ENCODE measurements at regions of chr11 and their contacts with region 1.

Region 1: DNA sequence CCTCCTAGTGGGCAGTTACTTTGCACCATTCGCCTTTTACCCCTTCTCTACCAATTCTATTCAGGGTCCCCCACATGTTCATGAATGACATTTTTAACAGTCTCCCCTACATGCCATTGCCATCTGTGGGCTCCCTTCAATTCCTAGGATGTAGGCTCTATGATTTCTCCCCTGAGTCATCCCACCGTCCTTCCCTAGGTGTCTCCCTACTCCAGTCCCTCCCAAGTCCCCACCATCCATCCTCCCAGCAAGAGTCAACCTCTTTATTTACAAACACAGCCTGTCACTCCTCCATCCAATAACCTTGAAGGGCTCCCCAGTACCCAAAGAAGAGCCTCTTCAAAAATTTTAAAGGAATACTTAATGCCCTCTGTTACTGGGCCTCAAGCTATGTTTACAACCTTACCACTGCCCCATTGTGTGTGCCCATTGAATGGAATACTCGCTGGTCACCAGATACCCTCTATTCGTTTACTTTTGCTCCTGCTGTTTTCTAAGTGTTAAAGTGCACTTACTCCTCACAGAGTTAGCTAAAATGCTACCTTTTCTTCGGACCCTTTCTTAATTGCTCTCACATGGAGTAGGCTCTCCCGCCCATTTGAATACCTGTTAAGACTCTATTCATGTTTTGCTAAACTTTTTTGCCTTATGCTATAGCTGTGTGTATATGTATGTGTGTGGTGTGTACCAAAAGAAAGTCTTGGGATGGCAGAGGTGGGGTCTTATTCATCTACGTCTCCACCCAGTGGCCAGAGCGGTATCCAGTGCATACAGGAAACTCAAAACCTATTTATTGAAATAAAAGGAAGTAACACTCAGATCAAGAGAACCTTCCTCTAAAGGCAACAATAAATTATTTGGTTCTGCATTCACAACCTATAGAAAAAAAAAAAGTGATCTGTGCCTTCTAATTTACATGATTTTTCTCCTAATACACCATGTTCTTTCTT is 235.8 kb upstream of the CCDC90B start:
- DNase-seq: peak; percentile 15
- ATAC-seq: peak; percentile 83
- H3K4me3 ChIP-seq: no peak overlapping the region
- H3K27ac ChIP-seq: no peak overlapping the region
- H3K4me1 ChIP-seq: peaks cover 17% of the 10 kb centered on the region
- H3K27me3 ChIP-seq: no peaks in the 10 kb centered on the region
- CTCF ChIP-seq: peak; percentile 53
- EP300 ChIP-seq: no peak
- POLR2A ChIP-seq: no peak
- RAD21 ChIP-seq: no peak

Region 2: GRCh38 chr11:82906244-82906654 is 615.7 kb before region 1 on chr11:
- CTCF ChIA-PET with region 1: no interaction called
- POLR2A ChIA-PET with region 1: no interaction called
- in situ Hi-C with region 1: no loop called
- intact Hi-C with region 1: loop called (anchors 5 kb)
- DNase-seq: peak; percentile 26
- ATAC-seq: no peak
- H3K4me3 ChIP-seq: no peak overlapping the region
- H3K27ac ChIP-seq: no peak overlapping the region
- H3K4me1 ChIP-seq: peaks cover 32% of the 10 kb centered on the region
- H3K27me3 ChIP-seq: no peaks in the 10 kb centered on the region
- CTCF ChIP-seq: peak; percentile 51
- EP300 ChIP-seq: no peak
- POLR2A ChIP-seq: no peak
- RAD21 ChIP-seq: peak; percentile 32; the same call in 1 of the 2 replicates